ENCODE measurements at regions of chr7 and their contacts with region 1.

Region 1: DNA sequence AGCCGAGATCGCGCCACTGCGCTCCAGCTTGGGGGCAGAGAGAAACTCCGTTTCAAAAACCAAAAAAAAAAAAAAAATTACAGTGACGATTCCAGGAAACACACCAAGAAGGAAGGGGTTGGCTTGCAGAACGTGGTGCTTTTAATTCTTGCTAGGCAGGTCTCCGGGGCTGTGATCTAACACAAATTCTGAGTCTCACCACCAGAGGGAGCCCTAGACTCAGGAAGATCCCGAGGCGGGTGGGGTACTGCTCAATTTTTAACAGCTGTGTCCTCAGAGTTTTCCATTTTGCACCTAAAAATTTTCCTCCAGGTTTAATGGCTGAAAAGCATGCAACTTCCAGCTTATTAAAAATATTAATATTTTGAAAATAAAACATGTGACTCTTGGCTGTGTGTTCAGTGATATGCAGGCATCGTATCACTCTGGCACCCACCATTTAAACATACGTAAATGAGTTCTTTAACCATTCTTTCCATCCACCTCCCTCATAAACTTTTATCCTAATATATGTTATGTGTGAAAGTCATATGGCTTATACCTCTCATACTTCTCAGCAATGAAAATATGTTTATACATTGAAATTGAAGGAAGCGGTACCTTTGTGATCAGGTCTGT is 26.5 kb upstream of the NUB1 start:
- H3K4me3 ChIP-seq: no peak overlapping the region
- H3K27ac ChIP-seq: no peak overlapping the region
- H3K4me1 ChIP-seq: no peaks in the 10 kb centered on the region
- CTCF ChIP-seq: no peak; the same call in 1 of the 2 replicates

Region 2: GRCh38 chr7:151299530-151299929 is 15.6 kb before region 1 on chr7:
- CTCF ChIA-PET with region 1: interaction called, 15 read pairs
- POLR2A ChIA-PET with region 1: no interaction called
- H3K4me3 ChIP-seq: no peak overlapping the region
- H3K27ac ChIP-seq: no peak overlapping the region
- H3K4me1 ChIP-seq: no peaks in the 10 kb centered on the region
- CTCF ChIP-seq: no peak

Region 3: GRCh38 chr7:151327659-151328058 is 12.5 kb after region 1 on chr7:
- CTCF ChIA-PET with region 1: interaction called, 73 read pairs
- POLR2A ChIA-PET with region 1: interaction called, 3 read pairs
- H3K4me3 ChIP-seq: no peak overlapping the region
- H3K27ac ChIP-seq: no peak overlapping the region
- H3K4me1 ChIP-seq: no peaks in the 10 kb centered on the region
- CTCF ChIP-seq: no peak

Region 4: DNA sequence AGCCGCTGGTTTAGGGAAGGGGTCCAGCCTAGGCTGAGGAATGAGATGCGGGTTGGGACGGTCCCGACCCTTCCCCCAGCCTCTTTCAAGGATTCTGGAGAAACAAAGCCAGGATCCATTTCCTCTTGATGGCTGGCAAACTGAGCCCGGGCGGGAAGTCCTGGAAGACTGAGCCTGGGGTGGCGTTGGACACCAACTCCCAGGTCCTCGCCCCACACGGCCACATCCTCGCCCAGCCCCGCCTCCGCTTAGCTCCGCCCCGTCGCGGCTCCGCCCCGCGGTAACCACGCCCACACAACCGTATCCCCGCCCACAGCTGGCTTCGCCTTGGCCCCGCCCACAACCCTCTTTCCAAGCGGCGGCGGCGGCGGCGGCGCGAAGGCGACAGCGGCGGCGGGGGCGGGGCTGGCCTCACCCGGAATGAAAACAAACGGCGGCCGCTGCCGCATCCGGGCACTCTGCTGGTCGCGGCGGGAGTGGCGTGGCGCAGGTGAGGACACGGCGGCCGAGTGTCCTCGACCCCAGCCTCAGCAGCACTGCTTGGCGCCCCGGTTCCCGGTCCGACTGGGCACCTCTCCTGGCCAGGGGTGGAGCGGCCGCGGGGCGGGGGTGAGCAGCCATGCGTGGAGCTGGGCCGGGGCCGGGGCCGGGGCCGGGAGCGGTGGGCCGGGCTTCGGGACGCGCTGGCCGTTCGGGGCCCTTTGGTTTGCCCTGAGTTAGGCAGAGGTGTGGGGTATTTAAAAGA is 26.4 kb after region 1 on chr7 and contains the start of gene NUB1:
- CTCF ChIA-PET with region 1: interaction called, 157 read pairs
- POLR2A ChIA-PET with region 1: no interaction called
- H3K4me3 ChIP-seq: peak within 1 kb of the TSS; percentile 97
- H3K27ac ChIP-seq: no peak within 1 kb of the TSS; the same call in 1 of the 2 replicates
- H3K4me1 ChIP-seq: no peaks in the 10 kb centered on the region
- CTCF ChIP-seq: no peak

Region 5: DNA sequence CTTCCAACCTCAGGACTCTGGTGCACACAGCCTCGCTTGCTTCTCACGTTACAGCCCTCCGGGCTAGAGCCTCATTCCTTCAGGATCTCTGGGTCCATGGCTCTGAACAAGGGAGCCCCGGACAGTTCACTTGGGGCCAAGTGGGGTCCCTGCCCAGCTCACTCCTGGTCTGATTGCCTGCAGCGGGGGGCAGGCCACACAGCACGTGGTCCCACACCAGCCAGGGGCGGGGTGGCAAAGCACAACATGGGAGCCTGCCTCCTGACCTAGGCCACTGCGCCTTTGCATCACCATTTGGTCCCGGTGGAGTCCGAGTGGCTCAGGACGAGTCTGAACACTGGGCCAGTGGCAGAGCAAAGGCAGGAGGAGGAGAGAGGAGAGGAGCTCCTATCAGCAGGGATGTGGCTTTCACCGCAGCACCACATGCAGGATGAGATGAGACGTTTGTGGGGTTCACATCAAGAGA is 138.2 kb after region 1 on chr7:
- CTCF ChIA-PET with region 1: no interaction called
- POLR2A ChIA-PET with region 1: no interaction called
- H3K4me3 ChIP-seq: no peak overlapping the region
- H3K27ac ChIP-seq: no peak overlapping the region
- H3K4me1 ChIP-seq: no peaks in the 10 kb centered on the region
- CTCF ChIP-seq: no peak

Region 6: DNA sequence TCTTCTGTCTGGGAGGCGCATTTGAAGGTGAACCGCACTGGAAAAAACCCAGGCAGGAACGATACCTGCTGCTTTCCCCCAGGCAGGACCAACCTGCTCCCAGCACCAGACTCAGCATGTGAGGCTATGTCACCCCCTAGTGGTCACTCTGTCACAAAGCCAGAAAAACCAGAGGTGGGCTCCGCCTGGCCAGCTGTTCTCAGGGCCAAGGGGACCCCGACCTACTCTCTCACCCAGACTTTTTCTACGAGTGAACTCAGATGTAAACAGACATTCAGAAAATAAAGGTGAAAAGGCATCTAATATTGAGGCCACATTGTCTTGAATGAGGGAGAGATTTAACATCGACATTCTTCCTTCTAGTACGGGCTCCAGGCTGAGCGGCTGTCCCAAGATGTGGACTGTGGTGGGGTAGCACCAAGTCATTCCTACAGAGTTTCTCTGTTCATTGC is 444.5 kb after region 1 on chr7:
- CTCF ChIA-PET with region 1: interaction called, 17 read pairs
- POLR2A ChIA-PET with region 1: no interaction called
- H3K4me3 ChIP-seq: no peak overlapping the region
- H3K27ac ChIP-seq: no peak overlapping the region
- H3K4me1 ChIP-seq: no peaks in the 10 kb centered on the region
- CTCF ChIP-seq: peak; percentile 83